Sigmoid colon (tissue), 7 donors: ENCODE measurements at regions of chr2 and their contacts with region 1.

Region 1: DNA sequence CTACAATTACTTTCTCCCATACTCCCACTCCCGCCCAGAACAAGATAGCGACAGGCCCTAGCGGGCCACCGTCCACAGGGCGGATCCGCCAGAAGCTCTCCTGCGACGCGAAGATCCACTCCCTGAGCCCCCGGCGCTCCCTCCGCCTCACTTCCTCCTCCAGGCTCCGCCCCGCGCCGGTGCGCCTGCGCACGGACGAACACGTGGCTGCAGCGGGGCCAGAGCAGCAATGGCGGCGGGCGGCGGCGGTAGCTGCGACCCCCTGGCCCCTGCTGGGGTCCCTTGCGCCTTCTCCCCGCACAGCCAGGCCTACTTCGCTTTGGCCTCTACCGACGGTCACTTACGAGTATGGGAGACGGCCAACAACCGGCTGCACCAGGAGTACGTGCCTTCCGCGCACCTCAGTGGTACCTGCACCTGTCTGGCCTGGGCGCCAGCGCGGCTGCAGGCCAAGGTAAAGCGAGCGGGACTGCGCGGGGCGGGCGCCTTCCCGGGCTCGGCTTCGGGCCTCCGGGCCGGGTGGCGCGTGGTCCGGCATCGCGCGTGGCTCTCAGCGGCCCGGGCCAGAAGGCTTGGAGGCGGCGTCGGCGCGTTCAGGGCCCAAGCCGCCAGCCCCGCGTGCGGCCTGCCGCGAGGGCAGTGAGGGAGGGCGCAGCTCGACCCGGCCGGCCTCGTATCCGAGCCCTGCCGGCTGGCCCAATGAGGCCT is at the start of gene WDR43:
- DNase-seq: peak; percentile 99
- H3K4me3 ChIP-seq: peak within 1 kb of the TSS; percentile 75 to 100 (median 88)
- H3K27ac ChIP-seq: peak within 1 kb of the TSS; percentile 81 to 90 (median 84)
- H3K4me1 ChIP-seq: peaks cover 0 to 44% (median 32%) of the 10 kb centered on the region in 4 donors
- H3K27me3 ChIP-seq: no peaks in the 10 kb centered on the region
- CTCF ChIP-seq: no peak
- EP300 ChIP-seq: peak in 1 of 4 donors; percentile 20
- POLR2A ChIP-seq: peak; percentile 43 to 55
- total RNA-seq, gene WDR43: 24.9 to 45.3 (median 36.1) TPM

Region 2: DNA sequence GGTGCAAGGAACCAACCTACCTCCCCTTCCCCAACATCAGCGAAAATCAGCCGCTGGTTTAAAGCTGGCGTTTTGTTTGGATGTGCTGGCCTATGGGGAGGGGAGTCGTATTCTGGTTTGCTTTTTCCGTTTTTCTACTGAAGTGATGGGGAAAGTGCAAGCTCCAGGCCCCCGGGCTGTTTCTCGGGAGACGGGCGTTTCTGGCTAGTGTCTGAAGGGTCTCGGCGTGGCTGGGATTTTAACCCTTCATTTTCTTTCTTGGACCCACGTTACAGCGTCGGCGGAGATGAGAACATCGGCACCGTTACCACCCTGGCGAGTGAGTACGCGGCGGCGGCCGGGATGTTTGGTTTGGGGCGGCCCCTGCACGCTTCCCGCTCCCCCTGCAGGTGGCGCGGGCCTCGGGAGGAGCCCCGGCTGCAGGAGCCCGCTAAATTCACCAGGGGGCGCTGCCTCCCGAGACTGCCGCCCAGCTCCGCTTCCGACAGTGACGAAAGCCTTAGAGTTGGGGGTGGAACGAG is 328.0 kb before region 1 on chr2:
- intact Hi-C with region 1: loop called (anchors 10 kb)
- DNase-seq: peak; percentile 91
- H3K4me3 ChIP-seq: peak overlapping the region; percentile 33 to 63 (median 60)
- H3K27ac ChIP-seq: peak overlapping the region; percentile 68 to 84 (median 71)
- H3K4me1 ChIP-seq: peaks cover 0 to 8% (median 0%) of the 10 kb centered on the region in 4 donors
- H3K27me3 ChIP-seq: no peaks in the 10 kb centered on the region
- CTCF ChIP-seq: peak; percentile 99 to 100 (median 99)
- EP300 ChIP-seq: peak in 1 of 4 donors; percentile 23
- POLR2A ChIP-seq: no peak

Region 3: GRCh38 chr2:28661589-28662001 is 233.0 kb before region 1 on chr2:
- intact Hi-C with region 1: no loop called
- DNase-seq: peak; percentile 95
- H3K4me3 ChIP-seq: no peak overlapping the region
- H3K27ac ChIP-seq: peak overlapping the region; percentile 83 to 94 (median 90)
- H3K4me1 ChIP-seq: peaks cover 0 to 72% (median 63%) of the 10 kb centered on the region in 4 donors
- H3K27me3 ChIP-seq: no peaks in the 10 kb centered on the region
- CTCF ChIP-seq: no peak
- EP300 ChIP-seq: peak; percentile 72 to 95 (median 81)
- POLR2A ChIP-seq: no peak

Region 4: GRCh38 chr2:28870146-28870891 is 24.3 kb before region 1 on chr2 and contains the start of gene TRMT61B:
- intact Hi-C with region 1: loop called (anchors 1 kb)
- DNase-seq: peak; percentile 97
- H3K4me3 ChIP-seq: peak within 1 kb of the TSS; percentile 75 to 93 (median 89)
- H3K27ac ChIP-seq: peak within 1 kb of the TSS; percentile 81 to 88 (median 84)
- H3K4me1 ChIP-seq: peaks cover 0 to 41% (median 29%) of the 10 kb centered on the region in 4 donors
- H3K27me3 ChIP-seq: no peaks in the 10 kb centered on the region
- CTCF ChIP-seq: no peak
- EP300 ChIP-seq: peak in 2 of 4 donors; percentile 12 to 64
- POLR2A ChIP-seq: peak; percentile 9 to 58
- total RNA-seq, gene TRMT61B: 8.6 to 16.8 (median 10.5) TPM

Region 5: DNA sequence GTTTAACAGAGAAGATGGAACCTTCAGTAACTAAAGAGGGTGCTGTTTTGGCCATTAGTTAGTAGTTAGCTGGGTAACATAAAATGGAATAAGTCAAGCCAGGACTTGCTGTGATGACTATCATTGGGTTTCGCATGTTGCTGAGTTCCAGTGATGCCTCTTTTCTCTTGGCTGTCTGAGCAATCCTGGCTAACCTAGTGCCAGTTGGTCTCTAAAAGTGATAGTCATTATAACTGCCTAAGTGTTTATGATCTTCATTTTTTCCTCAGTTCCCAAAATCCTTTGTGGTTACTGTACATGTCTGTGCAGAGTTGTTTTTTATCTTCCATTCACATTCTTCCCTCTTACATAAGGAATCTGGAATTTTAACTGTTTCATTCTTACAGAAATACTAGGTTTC is 33.3 kb after region 1 on chr2:
- intact Hi-C with region 1: no loop called
- DNase-seq: no peak
- H3K4me3 ChIP-seq: no peak overlapping the region
- H3K27ac ChIP-seq: no peak overlapping the region
- H3K4me1 ChIP-seq: no peaks in the 10 kb centered on the region
- H3K27me3 ChIP-seq: no peaks in the 10 kb centered on the region
- CTCF ChIP-seq: no peak
- EP300 ChIP-seq: no peak
- POLR2A ChIP-seq: no peak

Region 6: GRCh38 chr2:28956415-28956826 is 61.8 kb after region 1 on chr2:
- intact Hi-C with region 1: no loop called
- DNase-seq: no peak
- H3K4me3 ChIP-seq: no peak overlapping the region
- H3K27ac ChIP-seq: no peak overlapping the region
- H3K4me1 ChIP-seq: peaks cover 0 to 20% (median 16%) of the 10 kb centered on the region in 4 donors
- H3K27me3 ChIP-seq: no peaks in the 10 kb centered on the region
- CTCF ChIP-seq: no peak
- EP300 ChIP-seq: no peak
- POLR2A ChIP-seq: no peak

Region 7: DNA sequence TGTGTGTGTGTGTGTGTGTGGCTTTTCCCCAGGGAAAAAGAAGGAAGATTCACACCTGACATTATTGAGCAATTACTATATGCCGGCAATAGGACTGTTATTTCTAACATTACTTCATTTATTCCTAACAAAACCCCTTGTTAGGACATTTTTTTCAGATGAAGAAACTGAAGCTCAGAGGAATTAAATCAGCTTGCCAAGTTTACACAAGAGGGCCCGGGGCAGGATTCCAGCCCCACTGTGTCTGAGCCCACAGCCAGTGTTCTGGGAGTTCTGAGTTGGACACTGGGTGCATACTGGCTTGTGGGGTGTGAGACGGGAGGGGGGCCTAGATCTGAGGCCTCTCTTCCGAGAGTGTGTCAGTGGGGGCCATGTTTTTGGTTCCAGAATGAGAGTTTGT is 96.4 kb after region 1 on chr2:
- intact Hi-C with region 1: no loop called
- DNase-seq: peak; percentile 90
- H3K4me3 ChIP-seq: no peak overlapping the region
- H3K27ac ChIP-seq: peak overlapping the region; percentile 73 to 84 (median 80)
- H3K4me1 ChIP-seq: peaks cover 0 to 63% (median 45%) of the 10 kb centered on the region in 4 donors
- H3K27me3 ChIP-seq: no peaks in the 10 kb centered on the region
- CTCF ChIP-seq: no peak
- EP300 ChIP-seq: no peak
- POLR2A ChIP-seq: no peak